Naive thymus-derived CD4-positive, alpha-beta T cell (primary cell): ENCODE measurements at regions of chr9 and their contacts with region 1.

Region 1: GRCh38 chr9:5857928-5858327 is 25.0 kb upstream of the ERMP1 start:
- DNase-seq: no peak
- ATAC-seq: peak; percentile 38
- H3K4me3 ChIP-seq: no peak overlapping the region
- H3K4me3 Mint-ChIP-seq: no peak overlapping the region
- H3K27ac ChIP-seq: no peak overlapping the region
- H3K27ac Mint-ChIP-seq: no peak overlapping the region
- H3K4me1 ChIP-seq: no peaks in the 10 kb centered on the region
- H3K4me1 Mint-ChIP-seq: peaks cover 7 to 20% (median 9%) of the 10 kb centered on the region in 7 donors
- H3K27me3 ChIP-seq: no peaks in the 10 kb centered on the region
- H3K27me3 Mint-ChIP-seq: no peaks in the 10 kb centered on the region

Region 2: GRCh38 chr9:4740638-4741364 is 1117.1 kb before region 1 on chr9 and contains the start of gene AK3:
- CTCF ChIA-PET with region 1: no interaction called
- POLR2A ChIA-PET with region 1: no interaction called
- intact Hi-C with region 1: no loop called
- DNase-seq: peak; percentile 72 to 85 (median 83)
- ATAC-seq: peak; percentile 95
- H3K4me3 ChIP-seq: peak within 1 kb of the TSS; percentile 73
- H3K4me3 Mint-ChIP-seq: peak within 1 kb of the TSS; percentile 88 to 99 (median 94)
- H3K27ac ChIP-seq: peak within 1 kb of the TSS; percentile 86
- H3K27ac Mint-ChIP-seq: peak within 1 kb of the TSS; percentile 86 to 98 (median 93)
- H3K4me1 ChIP-seq: peaks cover 10 to 16% of the 10 kb centered on the region in 2 donors
- H3K4me1 Mint-ChIP-seq: peaks cover 22 to 49% (median 40%) of the 10 kb centered on the region in 7 donors
- H3K27me3 ChIP-seq: no peaks in the 10 kb centered on the region
- H3K27me3 Mint-ChIP-seq: no peaks in the 10 kb centered on the region
- total RNA-seq, gene AK3: 18.0 to 34.8 (median 25.8) TPM

Region 3: DNA sequence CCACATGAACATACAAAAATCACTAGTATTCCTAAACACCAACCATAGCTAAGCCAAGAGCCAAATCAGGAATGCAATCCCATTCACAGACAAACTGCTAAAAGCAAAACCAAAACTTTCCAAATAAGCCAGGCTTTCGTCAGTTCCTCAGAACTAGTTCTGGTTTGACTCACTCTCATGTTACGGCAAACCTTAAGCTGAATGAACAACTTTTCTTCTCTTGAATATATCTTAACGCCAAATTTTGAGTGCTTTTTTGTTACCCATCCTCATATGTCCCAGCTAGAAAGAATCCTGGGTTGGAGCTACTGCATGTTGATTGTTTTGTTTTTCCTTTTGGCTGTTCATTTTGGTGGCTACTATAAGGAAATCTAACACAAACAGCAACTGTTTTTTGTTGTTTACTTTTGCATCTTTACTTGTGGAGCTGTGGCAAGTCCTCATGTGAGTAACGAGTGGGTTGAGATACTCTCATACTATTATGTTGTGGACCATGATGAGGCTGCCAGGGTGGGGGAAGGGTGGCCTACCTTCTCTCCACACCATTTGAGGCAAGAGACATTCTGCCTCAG is 347.5 kb before region 1 on chr9 and contains the start of gene PDCD1LG2:
- CTCF ChIA-PET with region 1: no interaction called
- POLR2A ChIA-PET with region 1: no interaction called
- intact Hi-C with region 1: no loop called
- DNase-seq: peak in 1 of 9 donors; percentile 56
- ATAC-seq: peak; percentile 67
- H3K4me3 ChIP-seq: peak within 1 kb of the TSS; percentile 24
- H3K4me3 Mint-ChIP-seq: peak within 1 kb of the TSS; percentile 43 to 91 (median 66)
- H3K27ac ChIP-seq: no peak within 1 kb of the TSS
- H3K27ac Mint-ChIP-seq: peak within 1 kb of the TSS; percentile 63 to 97 (median 82)
- H3K4me1 ChIP-seq: peaks cover 0 to 8% of the 10 kb centered on the region in 2 donors
- H3K4me1 Mint-ChIP-seq: peaks cover 16 to 59% (median 18%) of the 10 kb centered on the region in 7 donors
- H3K27me3 ChIP-seq: no peaks in the 10 kb centered on the region
- H3K27me3 Mint-ChIP-seq: peaks cover 0 to 2% (median 0%) of the 10 kb centered on the region in 5 donors
- total RNA-seq, gene PDCD1LG2: 0.16 to 7.4 (median 0.32) TPM

Region 4: GRCh38 chr9:5825223-5825622 is 32.7 kb before region 1 on chr9:
- CTCF ChIA-PET with region 1: no interaction called
- POLR2A ChIA-PET with region 1: no interaction called
- intact Hi-C with region 1: no loop called
- DNase-seq: no peak
- ATAC-seq: no peak
- H3K4me3 ChIP-seq: no peak overlapping the region
- H3K4me3 Mint-ChIP-seq: no peak overlapping the region
- H3K27ac ChIP-seq: no peak overlapping the region
- H3K27ac Mint-ChIP-seq: peak overlapping the region in 2 of 9 donors; percentile 4 to 53
- H3K4me1 ChIP-seq: peaks cover 0 to 5% of the 10 kb centered on the region in 2 donors
- H3K4me1 Mint-ChIP-seq: peaks cover 16 to 50% (median 35%) of the 10 kb centered on the region in 7 donors
- H3K27me3 ChIP-seq: no peaks in the 10 kb centered on the region
- H3K27me3 Mint-ChIP-seq: no peaks in the 10 kb centered on the region

Region 5: GRCh38 chr9:5843794-5844504 is 14.0 kb before region 1 on chr9:
- CTCF ChIA-PET with region 1: interaction called, 7 read pairs
- POLR2A ChIA-PET with region 1: interaction called, 4 read pairs
- intact Hi-C with region 1: loop called in 1 of 2 experiments (anchors 2 kb)
- DNase-seq: peak in 2 of 9 donors; percentile 7 to 22
- ATAC-seq: peak; percentile 20
- H3K4me3 ChIP-seq: peak overlapping the region; percentile 5
- H3K4me3 Mint-ChIP-seq: peak overlapping the region; percentile 75 to 85 (median 80)
- H3K27ac ChIP-seq: peak overlapping the region; percentile 24
- H3K27ac Mint-ChIP-seq: peak overlapping the region; percentile 58 to 93 (median 91)
- H3K4me1 ChIP-seq: peaks cover 45 to 47% of the 10 kb centered on the region in 2 donors
- H3K4me1 Mint-ChIP-seq: peaks cover 50 to 83% (median 64%) of the 10 kb centered on the region in 7 donors
- H3K27me3 ChIP-seq: no peaks in the 10 kb centered on the region
- H3K27me3 Mint-ChIP-seq: no peaks in the 10 kb centered on the region